ENCODE measurements at regions of chr17 and their contacts with region 1.

Region 1: DNA sequence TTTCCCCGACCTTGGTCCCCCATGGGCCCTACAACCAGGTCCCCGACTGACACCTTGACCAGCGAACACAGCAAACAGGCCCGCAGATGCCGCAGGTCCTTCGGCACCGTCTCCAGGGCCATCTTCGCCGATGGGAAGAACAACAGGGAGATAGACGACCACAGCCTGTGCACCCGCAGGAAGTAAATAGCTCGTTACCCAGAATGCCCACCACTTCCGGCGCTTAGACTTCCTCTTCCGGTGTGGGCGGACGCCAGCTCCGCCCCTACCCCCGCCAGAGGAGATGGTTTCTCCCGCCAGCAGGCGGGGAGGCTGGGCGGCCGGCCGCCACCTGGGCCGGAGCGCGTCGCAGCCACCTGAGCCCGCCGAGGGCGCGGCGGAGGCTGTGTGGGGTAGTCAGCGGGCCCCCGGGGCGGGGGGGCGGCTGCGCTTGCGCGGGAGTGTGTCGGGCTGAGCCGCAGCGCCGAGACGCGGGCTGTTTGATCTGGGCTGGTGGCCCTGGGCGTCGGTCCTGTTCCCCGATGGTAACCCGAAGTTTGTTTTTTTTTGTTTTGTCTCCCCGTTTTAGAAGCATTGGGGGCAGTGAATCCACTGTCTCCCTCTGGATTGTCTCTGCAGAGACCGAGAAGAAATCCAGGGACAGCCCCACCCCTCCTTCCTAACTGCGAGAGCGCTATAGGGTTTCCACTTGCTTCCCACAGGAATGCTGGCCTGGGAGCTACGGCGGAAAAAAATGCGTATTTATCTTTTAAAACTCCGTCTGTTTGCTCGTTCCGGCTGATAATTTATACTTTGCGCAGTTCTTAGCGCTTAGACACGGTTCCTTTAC is at the start of gene SUPT4H1:
- DNase-seq: peak; percentile 94
- ATAC-seq: peak; percentile 94
- H3K4me3 ChIP-seq: peak within 1 kb of the TSS; percentile 73 to 92 (median 88)
- H3K27ac ChIP-seq: peak within 1 kb of the TSS; percentile 88
- H3K4me1 ChIP-seq: peaks cover 39% of the 10 kb centered on the region
- H3K27me3 ChIP-seq: no peaks in the 10 kb centered on the region; a peak in 1 of 5 replicates
- CTCF ChIP-seq: peak; percentile 64
- EP300 ChIP-seq: peak in 1 of 2 experiments; percentile 72; a peak in 2 of 4 replicates
- POLR2A ChIP-seq: peak; percentile 85 to 86
- RAD21 ChIP-seq: peak; percentile 96
- total RNA-seq, gene SUPT4H1: 155 and 252 TPM in 2 replicates

Region 2: GRCh38 chr17:58308173-58308984 is 43.8 kb before region 1 on chr17:
- CTCF ChIA-PET with region 1: no interaction called
- POLR2A ChIA-PET with region 1: no interaction called
- in situ Hi-C with region 1: no loop called
- intact Hi-C with region 1: no loop called
- DNase-seq: peak; percentile 39
- ATAC-seq: peak; percentile 88
- H3K4me3 ChIP-seq: peak overlapping the region in 1 of 3 experiments; percentile 44; a peak in 1 of 6 replicates
- H3K27ac ChIP-seq: no peak overlapping the region
- H3K4me1 ChIP-seq: peaks cover 18% of the 10 kb centered on the region
- H3K27me3 ChIP-seq: peaks cover 30 to 91% of the 10 kb centered on the region in 2 experiments; a peak in 4 of 5 replicates
- CTCF ChIP-seq: peak; percentile 92
- EP300 ChIP-seq: no peak
- POLR2A ChIP-seq: no peak
- RAD21 ChIP-seq: peak; percentile 83

Region 3: DNA sequence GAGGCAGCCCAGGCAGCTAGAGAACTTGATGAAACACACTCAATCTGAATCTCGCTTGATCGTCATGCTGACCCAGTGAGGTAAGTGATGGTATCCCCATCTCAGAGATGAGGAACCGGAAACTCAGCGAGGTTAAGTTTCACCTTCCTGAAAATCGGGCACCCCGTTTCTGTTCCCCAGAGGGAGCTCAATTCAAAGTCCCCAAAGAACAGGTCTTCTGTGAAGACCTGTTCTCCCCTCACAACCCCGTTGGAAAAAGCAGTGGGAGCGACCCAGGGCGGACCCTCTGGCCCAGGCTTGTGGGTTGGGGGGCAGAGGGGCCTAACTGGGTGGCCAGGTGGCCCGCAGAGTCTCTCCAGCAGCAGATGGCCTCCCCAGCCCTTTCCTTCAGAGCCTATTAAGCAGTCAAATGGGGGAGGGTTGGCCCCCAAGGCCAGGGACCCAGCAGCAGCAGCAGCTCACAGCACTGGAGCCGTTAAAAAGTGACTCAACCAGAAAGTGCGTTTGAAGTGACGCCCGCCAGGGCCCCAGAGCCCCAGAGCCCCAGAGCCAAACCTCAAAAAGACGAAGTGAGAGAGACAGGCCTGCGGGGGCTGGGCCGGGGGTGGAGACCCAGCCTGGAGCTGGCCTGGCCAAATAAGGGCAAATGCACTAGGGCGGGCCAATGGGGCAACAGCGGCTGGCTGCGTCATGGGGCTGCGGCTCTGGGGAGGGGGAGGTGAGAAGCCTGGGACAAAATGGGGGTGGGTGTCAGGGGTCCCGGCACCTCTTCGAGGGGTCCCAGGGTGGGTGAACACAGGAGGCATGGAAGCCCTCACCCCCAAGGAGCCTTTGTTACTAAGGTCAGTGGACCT is 14.4 kb before region 1 on chr17:
- CTCF ChIA-PET with region 1: no interaction called
- POLR2A ChIA-PET with region 1: interaction called, 42 read pairs
- in situ Hi-C with region 1: no loop called
- intact Hi-C with region 1: no loop called
- DNase-seq: peak; percentile 82
- ATAC-seq: peak; percentile 71
- H3K4me3 ChIP-seq: peak overlapping the region; percentile 3 to 60 (median 5); a peak in 3 of 6 replicates
- H3K27ac ChIP-seq: peak overlapping the region; percentile 24
- H3K4me1 ChIP-seq: peaks cover 62% of the 10 kb centered on the region
- H3K27me3 ChIP-seq: no peaks in the 10 kb centered on the region
- CTCF ChIP-seq: no peak
- EP300 ChIP-seq: no peak
- POLR2A ChIP-seq: no peak
- RAD21 ChIP-seq: no peak

Region 4: DNA sequence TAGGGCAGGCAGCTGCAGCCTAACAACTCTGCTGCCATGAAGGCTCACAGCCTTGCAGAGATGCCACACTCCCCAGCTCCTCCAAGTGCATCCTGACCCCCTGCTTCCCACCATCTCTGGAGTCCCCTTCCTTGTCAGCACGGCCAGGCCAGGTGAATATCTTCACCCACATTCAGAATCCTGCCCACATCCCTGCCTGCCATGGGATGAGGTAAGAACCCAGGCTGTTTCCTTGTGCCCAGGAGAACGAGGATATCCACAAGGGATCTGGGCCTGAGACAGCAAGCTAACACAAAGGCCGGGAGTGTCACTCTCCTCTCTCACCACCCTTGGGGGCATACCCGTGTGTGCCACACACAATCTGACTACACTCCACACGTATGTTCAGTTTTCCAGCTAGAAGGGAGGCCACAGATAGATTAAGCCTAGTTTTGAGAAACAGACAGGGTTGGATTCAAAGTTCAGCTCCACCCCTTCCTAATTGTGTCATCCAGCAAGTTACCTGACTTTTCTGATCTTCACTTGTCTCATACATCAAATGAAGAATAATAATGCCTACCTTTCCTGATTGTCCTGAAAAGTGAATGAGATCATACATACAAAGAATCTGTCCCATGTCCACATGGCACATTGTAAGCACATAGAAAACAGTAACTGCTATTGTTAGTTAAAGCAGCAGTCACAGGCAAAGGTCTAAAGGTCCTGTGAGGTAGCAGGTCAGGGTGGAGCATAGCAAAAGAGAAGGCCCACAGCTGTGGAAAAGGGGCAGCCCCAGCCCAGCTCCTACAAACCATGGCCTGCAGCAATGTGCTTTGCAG is 17.2 kb after region 1 on chr17:
- CTCF ChIA-PET with region 1: no interaction called
- POLR2A ChIA-PET with region 1: interaction called, 252 read pairs
- in situ Hi-C with region 1: no loop called
- intact Hi-C with region 1: loop called (anchors 1 kb)
- DNase-seq: peak; percentile 97
- ATAC-seq: peak; percentile 93
- H3K4me3 ChIP-seq: peak overlapping the region in 2 of 3 experiments; percentile 1 to 47; a peak in 3 of 6 replicates
- H3K27ac ChIP-seq: peak overlapping the region; percentile 92
- H3K4me1 ChIP-seq: peaks cover 97% of the 10 kb centered on the region
- H3K27me3 ChIP-seq: no peaks in the 10 kb centered on the region
- CTCF ChIP-seq: no peak
- EP300 ChIP-seq: peak in 1 of 2 experiments; percentile 58; a peak in 2 of 4 replicates
- POLR2A ChIP-seq: peak; percentile 12 to 31; a peak in 2 of 4 replicates
- RAD21 ChIP-seq: peak; percentile 35

Region 5: DNA sequence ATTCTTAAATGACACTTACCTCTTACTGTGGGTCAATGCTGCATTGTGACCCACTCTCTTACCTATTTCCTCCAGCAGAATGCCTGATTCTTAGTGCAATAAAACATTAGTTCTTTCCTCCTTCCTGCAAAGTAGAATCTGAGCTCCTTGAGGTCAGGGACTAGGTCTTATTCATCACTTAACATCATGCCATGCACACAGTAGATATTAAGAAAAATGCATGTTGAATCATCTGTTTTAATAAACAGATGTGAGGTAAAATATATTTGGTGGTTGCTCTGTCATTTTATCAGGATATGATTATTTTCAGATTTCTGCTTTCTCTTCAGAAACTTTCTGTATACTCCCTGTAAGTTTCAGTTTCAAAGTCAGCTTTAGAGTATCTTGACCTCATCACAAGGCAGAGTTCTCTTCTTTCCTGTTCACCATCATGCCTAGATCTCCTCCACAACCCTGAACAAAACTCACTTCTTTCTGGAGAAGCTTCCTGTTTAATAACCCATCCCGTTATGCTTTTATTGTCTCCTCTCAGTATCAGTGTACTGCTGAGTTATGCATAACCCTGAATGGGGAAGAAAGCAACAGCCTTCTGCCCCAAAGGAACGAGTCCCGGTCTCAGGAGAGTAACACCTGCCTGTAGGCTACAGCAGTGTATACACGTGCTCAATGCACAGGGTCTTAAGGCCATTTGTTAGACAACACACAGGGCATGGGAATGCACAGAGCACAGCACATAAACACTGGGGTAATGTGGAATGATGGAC is 30.1 kb after region 1 on chr17:
- CTCF ChIA-PET with region 1: no interaction called
- POLR2A ChIA-PET with region 1: interaction called, 145 read pairs
- in situ Hi-C with region 1: no loop called
- intact Hi-C with region 1: loop called (anchors 1 kb)
- DNase-seq: peak; percentile 60
- ATAC-seq: peak; percentile 32
- H3K4me3 ChIP-seq: peak overlapping the region in 1 of 3 experiments; percentile 5; a peak in 1 of 6 replicates
- H3K27ac ChIP-seq: peak overlapping the region; percentile 93
- H3K4me1 ChIP-seq: peaks cover 100% of the 10 kb centered on the region
- H3K27me3 ChIP-seq: no peaks in the 10 kb centered on the region
- CTCF ChIP-seq: 0 out of 2 replicates have a peak, but pooled peaks have one; percentile 9
- EP300 ChIP-seq: no peak; a peak in 1 of 4 replicates
- POLR2A ChIP-seq: peak in 1 of 2 experiments; percentile 40; a peak in 1 of 4 replicates
- RAD21 ChIP-seq: no peak

Region 6: DNA sequence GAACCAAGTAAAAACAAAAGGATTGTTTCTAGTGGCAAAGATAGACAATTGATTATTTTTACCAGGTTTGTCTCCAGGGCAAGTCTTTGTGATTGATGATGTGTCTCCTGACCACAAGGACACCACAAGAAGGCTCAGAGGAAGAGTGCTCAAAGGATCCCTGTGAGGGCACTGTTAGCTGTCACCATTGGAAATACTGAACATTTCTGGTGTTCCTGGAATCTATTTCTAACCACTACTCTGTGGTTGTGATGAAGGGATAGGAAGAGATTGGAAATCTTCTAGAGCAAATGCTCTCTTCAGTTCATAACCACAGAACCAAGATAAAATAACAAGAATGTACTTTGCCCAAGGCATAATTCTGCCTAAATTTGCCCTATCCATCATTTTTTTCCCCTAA is 49.8 kb after region 1 on chr17:
- CTCF ChIA-PET with region 1: no interaction called
- POLR2A ChIA-PET with region 1: interaction called, 10 read pairs
- in situ Hi-C with region 1: no loop called
- intact Hi-C with region 1: no loop called
- DNase-seq: no peak
- ATAC-seq: no peak
- H3K4me3 ChIP-seq: no peak overlapping the region
- H3K27ac ChIP-seq: peak overlapping the region; percentile 22
- H3K4me1 ChIP-seq: peaks cover 100% of the 10 kb centered on the region
- H3K27me3 ChIP-seq: no peaks in the 10 kb centered on the region
- CTCF ChIP-seq: no peak
- EP300 ChIP-seq: no peak
- POLR2A ChIP-seq: no peak
- RAD21 ChIP-seq: no peak

Region 7: DNA sequence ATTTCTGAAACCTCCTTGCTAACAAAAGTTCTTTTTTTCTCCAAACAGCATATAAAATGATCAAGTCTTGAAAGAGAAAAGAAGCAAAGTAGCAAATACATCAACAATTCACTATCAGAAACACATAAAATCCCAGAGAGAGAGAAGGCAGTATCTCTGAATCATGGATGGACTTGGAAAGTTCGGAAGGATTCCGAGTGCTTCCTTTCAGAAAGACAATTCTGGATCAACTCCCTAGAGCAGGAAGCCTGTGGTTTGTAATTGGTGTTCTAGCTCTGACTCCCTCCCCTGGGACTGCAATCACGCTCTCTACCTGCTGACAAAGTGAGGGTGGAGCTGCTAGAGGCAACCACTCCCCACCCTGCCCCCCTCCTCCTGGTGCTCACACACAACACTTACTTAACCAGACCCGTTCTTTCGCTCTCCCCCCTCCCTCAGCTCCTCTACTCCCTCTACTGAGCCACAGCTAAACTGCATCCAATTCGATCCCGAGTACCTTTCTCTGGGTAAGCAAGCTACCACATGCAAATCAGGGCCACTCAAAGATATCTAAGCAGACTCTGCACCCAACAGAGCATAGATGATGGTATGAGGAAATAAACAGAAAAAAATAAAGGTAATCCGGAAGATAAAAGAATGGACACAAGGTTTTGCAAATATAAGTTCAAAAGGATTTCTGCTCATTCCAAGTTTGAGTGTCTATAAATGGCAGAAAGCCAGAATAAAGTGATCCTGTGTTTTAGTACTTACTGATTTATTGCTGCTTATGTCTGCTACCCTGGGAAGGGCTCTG is 65.3 kb after region 1 on chr17 and contains the start of gene RNF43:
- CTCF ChIA-PET with region 1: interaction called, 19 read pairs
- POLR2A ChIA-PET with region 1: interaction called, 254 read pairs
- in situ Hi-C with region 1: no loop called
- intact Hi-C with region 1: loop called (anchors 1 kb)
- DNase-seq: peak; percentile 99
- ATAC-seq: peak; percentile 97
- H3K4me3 ChIP-seq: peak within 1 kb of the TSS; percentile 73 to 88 (median 81)
- H3K27ac ChIP-seq: peak within 1 kb of the TSS; percentile 77
- H3K4me1 ChIP-seq: peaks cover 15% of the 10 kb centered on the region
- H3K27me3 ChIP-seq: peaks cover 0 to 14% of the 10 kb centered on the region in 2 experiments; a peak in 3 of 5 replicates
- CTCF ChIP-seq: peak; percentile 99
- EP300 ChIP-seq: peak; percentile 73 to 78; a peak in 3 of 4 replicates
- POLR2A ChIP-seq: peak; percentile 96 to 98
- RAD21 ChIP-seq: peak; percentile 97
- total RNA-seq, gene RNF43: 51.4 and 53.4 TPM in 2 replicates